ENCODE measurements at regions of chr11 and their contacts with region 1.

Region 1: GRCh38 chr11:92224407-92225124 is at the start of gene FAT3:
- DNase-seq: peak in 1 of 2 experiments; percentile 46
- H3K4me3 ChIP-seq: peak within 1 kb of the TSS; percentile 60
- H3K27ac ChIP-seq: no peak within 1 kb of the TSS
- H3K4me1 ChIP-seq: peaks cover 5% of the 10 kb centered on the region
- H3K27me3 ChIP-seq: peaks cover 46% of the 10 kb centered on the region
- CTCF ChIP-seq: no peak
- total RNA-seq, gene FAT3: 3.4 and 7.6 TPM in 2 replicates

Region 2: DNA sequence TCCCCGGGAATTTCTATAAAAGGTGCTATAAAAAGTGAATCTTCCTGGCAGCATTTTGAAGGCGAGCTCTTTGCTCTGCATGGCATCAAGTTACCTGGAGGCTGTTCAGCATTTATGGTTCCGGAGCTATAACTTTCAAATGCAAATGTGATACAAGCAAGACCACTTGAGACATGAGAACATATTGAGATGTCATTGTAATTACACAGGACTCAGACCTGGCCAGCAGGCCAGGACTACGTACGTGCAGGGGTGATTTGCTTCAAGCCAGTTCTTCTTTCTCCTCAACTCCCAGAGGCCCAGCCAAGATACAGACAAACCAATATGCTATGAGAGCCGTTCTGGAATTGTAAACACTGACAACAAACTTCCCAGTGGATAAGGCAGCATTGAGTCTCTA is 227.3 kb before region 1 on chr11:
- CTCF ChIA-PET with region 1: no interaction called
- POLR2A ChIA-PET with region 1: no interaction called
- intact Hi-C with region 1: no loop called
- DNase-seq: no peak
- H3K4me3 ChIP-seq: no peak overlapping the region
- H3K27ac ChIP-seq: no peak overlapping the region
- H3K4me1 ChIP-seq: no peaks in the 10 kb centered on the region
- H3K27me3 ChIP-seq: no peaks in the 10 kb centered on the region
- CTCF ChIP-seq: no peak

Region 3: DNA sequence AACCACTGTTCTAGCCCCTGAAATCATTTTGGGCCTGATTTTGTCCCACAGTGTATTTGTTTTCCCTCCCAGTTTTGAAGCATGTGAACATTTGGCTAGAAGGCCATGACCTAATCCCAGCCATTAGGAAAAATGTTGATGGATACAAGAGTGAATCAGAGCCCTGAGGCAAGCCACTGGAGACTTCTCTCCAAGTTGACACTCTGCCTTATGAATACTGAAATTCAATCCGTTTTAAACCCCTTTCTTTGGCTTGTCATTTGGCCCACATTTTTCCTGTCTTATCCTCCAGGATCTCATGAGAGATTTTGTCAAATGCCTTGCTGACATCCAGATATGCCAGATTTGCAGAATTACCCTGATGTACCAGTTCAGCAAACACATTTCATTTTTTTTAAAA is 158.9 kb after region 1 on chr11:
- CTCF ChIA-PET with region 1: no interaction called
- POLR2A ChIA-PET with region 1: no interaction called
- intact Hi-C with region 1: loop called (anchors 5 kb)
- DNase-seq: peak; percentile 57 to 89
- H3K4me3 ChIP-seq: no peak overlapping the region
- H3K27ac ChIP-seq: peak overlapping the region; percentile 18; the same call in 1 of the 2 replicates
- H3K4me1 ChIP-seq: peaks cover 23% of the 10 kb centered on the region
- H3K27me3 ChIP-seq: no peaks in the 10 kb centered on the region
- CTCF ChIP-seq: no peak

Region 4: GRCh38 chr11:92552942-92553341 is 328.4 kb after region 1 on chr11:
- CTCF ChIA-PET with region 1: no interaction called
- POLR2A ChIA-PET with region 1: no interaction called
- intact Hi-C with region 1: loop called (anchors 5 kb)
- DNase-seq: no peak
- H3K4me3 ChIP-seq: no peak overlapping the region
- H3K27ac ChIP-seq: no peak overlapping the region
- H3K4me1 ChIP-seq: no peaks in the 10 kb centered on the region
- H3K27me3 ChIP-seq: no peaks in the 10 kb centered on the region
- CTCF ChIP-seq: peak; percentile 77

Region 5: DNA sequence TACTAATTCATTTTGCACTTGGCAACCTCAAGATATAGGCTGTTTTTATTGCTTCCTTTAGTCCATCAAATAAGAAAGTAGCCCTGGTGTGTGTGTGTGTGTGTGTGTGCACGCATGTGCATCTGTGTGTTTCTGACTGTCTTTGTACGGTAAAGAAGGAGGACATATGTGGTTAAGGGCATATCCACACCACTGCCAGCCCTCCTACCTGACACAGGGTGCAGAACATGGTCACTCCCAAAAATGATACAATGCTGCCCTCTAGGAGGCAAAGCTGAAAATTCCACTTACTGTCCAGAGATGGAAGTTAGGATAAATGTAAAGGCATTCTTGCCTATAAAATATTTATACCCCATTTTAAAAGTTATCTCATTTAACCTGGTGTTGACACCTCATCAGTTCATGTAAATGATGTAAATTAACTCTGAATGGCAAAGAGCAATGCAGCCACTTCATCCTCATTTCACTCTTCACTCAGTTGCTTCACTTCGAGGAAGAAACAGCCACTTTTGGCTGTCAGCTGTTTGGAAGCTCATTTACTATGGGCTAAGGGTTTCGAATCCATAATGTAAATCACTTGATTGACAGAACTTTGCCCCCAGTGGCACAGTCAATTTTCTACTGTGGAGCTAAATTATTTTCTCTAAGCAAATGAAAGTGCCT is 661.8 kb after region 1 on chr11:
- CTCF ChIA-PET with region 1: no interaction called
- POLR2A ChIA-PET with region 1: no interaction called
- intact Hi-C with region 1: loop called (anchors 10 kb)
- DNase-seq: peak; percentile 40 to 43
- H3K4me3 ChIP-seq: no peak overlapping the region
- H3K27ac ChIP-seq: no peak overlapping the region
- H3K4me1 ChIP-seq: no peaks in the 10 kb centered on the region
- H3K27me3 ChIP-seq: no peaks in the 10 kb centered on the region
- CTCF ChIP-seq: peak; percentile 83